ENCODE measurements at regions of chr12 and their contacts with region 1.

Region 1: DNA sequence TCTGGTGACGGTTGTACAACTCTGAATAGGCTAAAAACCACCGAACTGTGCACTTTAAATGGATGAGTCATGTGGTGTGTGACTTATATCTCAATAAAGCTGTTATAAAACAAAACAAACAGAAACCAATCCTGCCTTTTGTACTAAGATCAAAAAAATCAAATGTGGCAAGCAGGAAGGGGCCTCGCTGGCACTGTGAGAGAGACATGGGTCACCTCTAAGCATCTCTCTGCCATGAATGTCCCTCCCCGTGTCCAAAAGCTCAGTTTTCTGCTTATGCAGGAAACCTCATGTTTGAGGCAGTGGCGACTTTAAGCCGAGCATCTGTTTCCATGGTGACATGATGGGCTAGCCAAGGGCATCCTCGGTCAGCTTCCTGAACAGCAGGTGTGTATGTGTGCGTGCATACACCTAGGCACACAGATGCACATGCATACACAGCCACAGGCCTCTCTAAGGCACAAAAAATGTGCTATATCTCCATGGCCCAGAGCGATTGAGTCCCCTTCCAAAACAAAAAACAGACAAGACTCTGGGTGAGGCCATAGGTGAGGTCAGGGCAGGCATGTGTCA is 44.4 kb downstream of the ARL6IP4 start:
- DNase-seq: no peak
- H3K4me3 ChIP-seq: no peak overlapping the region
- H3K27me3 ChIP-seq: peaks cover 3% of the 10 kb centered on the region
- CTCF ChIP-seq: no peak

Region 2: DNA sequence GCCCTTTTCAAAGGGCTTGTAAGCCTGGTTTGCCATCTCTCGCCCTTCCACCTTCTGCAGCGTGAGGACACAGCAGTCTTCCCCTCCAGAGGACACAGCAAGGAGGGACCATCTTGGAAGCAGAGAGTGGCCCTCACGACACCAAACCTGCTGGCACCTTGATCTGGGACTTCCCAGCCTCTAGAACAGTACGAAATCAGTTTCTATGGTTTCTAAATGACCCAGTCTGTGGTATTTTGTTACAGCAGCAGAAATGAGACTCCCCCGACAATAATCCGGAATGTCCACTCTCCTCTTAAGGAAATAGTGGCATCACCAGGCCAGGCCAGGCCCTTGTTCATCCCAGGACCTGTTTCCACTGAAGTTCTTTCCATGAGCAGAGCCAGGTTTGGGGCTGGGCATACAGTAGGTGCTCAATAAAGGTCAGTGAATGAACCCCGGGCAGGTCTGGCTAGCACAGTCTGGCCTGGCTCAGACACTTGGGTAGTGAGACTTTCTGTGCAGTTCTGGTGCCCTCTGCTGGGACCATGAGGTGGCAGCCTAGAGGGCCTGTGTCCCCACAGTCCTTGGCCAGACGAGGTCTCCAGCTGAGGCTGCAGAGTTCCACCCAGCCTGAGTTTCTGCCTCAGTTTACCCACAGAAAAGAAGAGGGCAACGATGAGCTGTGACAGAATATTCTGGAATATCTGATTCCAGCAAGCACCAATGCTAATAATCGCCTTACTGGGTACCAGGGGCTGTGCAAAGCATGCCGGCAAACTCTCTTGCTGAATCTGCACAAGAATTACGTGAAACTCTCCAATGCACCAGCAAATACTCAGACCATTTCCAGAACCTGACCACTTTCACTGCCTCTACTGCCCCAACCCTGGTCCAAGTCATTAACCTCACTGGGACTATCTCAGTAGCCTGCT is 72.7 kb before region 1 on chr12:
- CTCF ChIA-PET with region 1: no interaction called
- POLR2A ChIA-PET with region 1: no interaction called
- DNase-seq: no peak
- H3K4me3 ChIP-seq: no peak overlapping the region
- H3K27me3 ChIP-seq: no peaks in the 10 kb centered on the region
- CTCF ChIP-seq: peak; percentile 94

Region 3: GRCh38 chr12:124240493-124240892 is 1215.6 kb after region 1 on chr12:
- CTCF ChIA-PET with region 1: no interaction called
- POLR2A ChIA-PET with region 1: interaction called, 11 read pairs
- DNase-seq: no peak
- H3K4me3 ChIP-seq: no peak overlapping the region
- H3K27me3 ChIP-seq: peaks cover 2% of the 10 kb centered on the region; the same call in 1 of the 2 replicates
- CTCF ChIP-seq: no peak